Activated CD4-positive, alpha-beta T cell treated with anti-CD3 and anti-CD28 coated beads for 36 hours (primary cell): ENCODE measurements at regions of chr10 and their contacts with region 1.

Region 1: DNA sequence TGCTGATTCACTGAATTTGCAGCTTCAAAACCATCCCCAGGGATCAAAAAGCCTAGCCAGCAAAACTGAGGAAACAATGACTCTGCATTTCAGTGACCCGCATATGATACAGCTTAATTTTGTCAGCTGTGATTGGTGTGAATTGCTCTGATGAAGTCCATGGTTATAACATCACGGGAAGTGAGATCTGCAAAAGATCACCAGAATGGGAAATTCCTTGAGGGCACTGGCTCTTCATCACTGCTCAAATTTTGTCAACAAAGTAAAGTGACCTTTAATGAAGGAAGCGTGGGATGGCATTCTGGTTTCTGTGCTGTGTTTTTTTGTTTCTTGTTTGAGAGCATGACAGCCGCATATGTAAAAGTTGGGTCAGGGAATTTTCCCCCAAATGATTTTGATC is 745.9 kb downstream of the GATA3 start:
- DNase-seq: peak; percentile 9
- ATAC-seq: peak; percentile 53
- H3K4me3 Mint-ChIP-seq: no peak overlapping the region
- H3K27ac Mint-ChIP-seq: no peak overlapping the region
- H3K4me1 Mint-ChIP-seq: peaks cover 11% of the 10 kb centered on the region
- H3K27me3 Mint-ChIP-seq: peaks cover 2% of the 10 kb centered on the region

Region 2: DNA sequence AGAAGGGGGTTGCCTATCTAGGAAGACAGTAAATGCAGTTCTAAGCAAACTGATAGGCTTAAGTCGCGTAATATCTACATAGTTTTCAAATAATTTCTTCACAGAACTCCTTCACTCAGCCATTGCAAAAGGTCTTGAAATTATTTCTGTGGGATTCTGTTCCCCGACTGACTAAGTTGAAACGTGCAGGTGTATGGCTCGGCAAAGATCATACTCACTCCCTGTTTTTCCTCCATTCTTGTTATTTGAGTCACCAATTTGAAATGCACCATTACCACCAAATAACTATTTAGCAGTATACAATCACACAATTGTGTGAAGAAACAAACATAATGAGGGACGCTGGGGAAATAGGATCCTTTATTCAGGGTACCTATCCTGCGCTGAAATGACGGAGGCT is 25.2 kb after region 1 on chr10:
- CTCF ChIA-PET with region 1: no interaction called
- POLR2A ChIA-PET with region 1: no interaction called
- intact Hi-C with region 1: loop called in 1 of 2 experiments (anchors 1 kb)
- DNase-seq: no peak
- ATAC-seq: no peak
- H3K4me3 Mint-ChIP-seq: no peak overlapping the region
- H3K27ac Mint-ChIP-seq: no peak overlapping the region
- H3K4me1 Mint-ChIP-seq: peaks cover 3% of the 10 kb centered on the region
- H3K27me3 Mint-ChIP-seq: no peaks in the 10 kb centered on the region